SK-N-SH (cell line): ENCODE measurements at regions of chr14 and their contacts with region 1.

Region 1: GRCh38 chr14:94485944-94486841 is 10.2 kb upstream of the SERPINA9 start:
- DNase-seq: peak; percentile 85
- H3K4me3 ChIP-seq: peak overlapping the region; percentile 12 to 56; a peak in 2 of 4 replicates
- H3K27ac ChIP-seq: no peak overlapping the region
- H3K4me1 ChIP-seq: peaks cover 3 to 4% of the 10 kb centered on the region in 2 experiments; a peak in 2 of 4 replicates
- H3K27me3 ChIP-seq: no peaks in the 10 kb centered on the region; the same call in 1 of the 2 replicates
- CTCF ChIP-seq: peak; percentile 99
- EP300 ChIP-seq: no peak
- RAD21 ChIP-seq: peak; percentile 78

Region 2: GRCh38 chr14:94412671-94413638 is 73.2 kb before region 1 on chr14:
- CTCF ChIA-PET with region 1: interaction called, 10 read pairs
- POLR2A ChIA-PET with region 1: no interaction called
- DNase-seq: no peak
- H3K4me3 ChIP-seq: no peak overlapping the region
- H3K27ac ChIP-seq: no peak overlapping the region
- H3K4me1 ChIP-seq: no peaks in the 10 kb centered on the region
- H3K27me3 ChIP-seq: no peaks in the 10 kb centered on the region
- CTCF ChIP-seq: peak; percentile 58
- EP300 ChIP-seq: no peak
- RAD21 ChIP-seq: peak; percentile 43

Region 3: DNA sequence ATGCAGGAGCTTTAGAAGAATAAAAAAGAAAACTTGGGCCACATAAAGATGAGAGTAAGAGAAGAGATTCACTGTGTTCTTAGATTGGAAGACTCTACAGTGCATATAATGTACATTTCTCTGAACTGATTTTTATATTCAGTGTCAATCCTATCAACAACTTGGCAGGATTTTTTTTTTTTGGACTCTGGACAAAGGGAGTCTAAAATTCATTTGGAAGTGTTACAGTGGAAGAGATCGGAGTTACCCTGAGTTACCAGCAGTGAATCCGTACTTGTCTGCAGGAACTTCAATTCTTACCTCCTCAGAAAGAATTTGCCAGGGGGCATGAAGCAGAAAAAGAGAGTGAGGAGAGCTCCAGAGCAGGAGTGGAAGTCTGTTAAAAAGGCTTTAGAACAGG is 57.6 kb before region 1 on chr14:
- CTCF ChIA-PET with region 1: interaction called, 37 read pairs
- POLR2A ChIA-PET with region 1: interaction called, 4 read pairs
- DNase-seq: no peak
- H3K4me3 ChIP-seq: no peak overlapping the region
- H3K27ac ChIP-seq: no peak overlapping the region
- H3K4me1 ChIP-seq: no peaks in the 10 kb centered on the region
- H3K27me3 ChIP-seq: peaks cover 6% of the 10 kb centered on the region; the same call in 1 of the 2 replicates
- CTCF ChIP-seq: no peak
- EP300 ChIP-seq: no peak
- RAD21 ChIP-seq: no peak

Region 4: GRCh38 chr14:94474581-94475031 is 11.6 kb before region 1 on chr14:
- CTCF ChIA-PET with region 1: interaction called, 48 read pairs
- POLR2A ChIA-PET with region 1: no interaction called
- DNase-seq: no peak
- H3K4me3 ChIP-seq: no peak overlapping the region
- H3K27ac ChIP-seq: no peak overlapping the region
- H3K4me1 ChIP-seq: no peaks in the 10 kb centered on the region
- H3K27me3 ChIP-seq: peaks cover 6% of the 10 kb centered on the region; the same call in 1 of the 2 replicates
- CTCF ChIP-seq: no peak
- EP300 ChIP-seq: no peak
- RAD21 ChIP-seq: no peak

Region 5: DNA sequence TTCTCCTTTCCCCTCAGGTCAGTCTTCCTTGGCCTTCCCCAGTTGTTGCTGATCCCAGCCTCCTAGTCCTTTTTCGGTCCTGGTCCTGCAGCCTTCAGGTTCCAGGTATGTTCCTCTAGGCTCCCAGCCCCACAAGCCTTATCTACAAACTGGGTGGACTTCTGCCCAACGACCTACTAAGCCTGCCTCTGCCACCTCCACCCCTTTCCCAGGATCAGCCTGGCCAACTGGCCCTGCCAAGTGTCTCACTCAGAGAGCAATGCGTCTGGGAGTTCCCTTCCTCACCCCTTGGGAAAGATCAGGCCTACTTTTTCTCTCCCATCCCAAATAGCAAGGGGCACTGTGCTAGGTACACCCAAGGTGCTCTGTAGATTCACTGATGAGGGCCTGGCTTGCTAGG is 23.2 kb after region 1 on chr14 and contains the start of gene SERPINA12:
- CTCF ChIA-PET with region 1: interaction called, 21 read pairs
- POLR2A ChIA-PET with region 1: no interaction called
- DNase-seq: no peak
- H3K4me3 ChIP-seq: no peak within 1 kb of the TSS
- H3K27ac ChIP-seq: no peak within 1 kb of the TSS
- H3K4me1 ChIP-seq: no peaks in the 10 kb centered on the region
- H3K27me3 ChIP-seq: peaks cover 17% of the 10 kb centered on the region; the same call in 1 of the 2 replicates
- CTCF ChIP-seq: no peak
- EP300 ChIP-seq: no peak
- RAD21 ChIP-seq: no peak
- polyA plus RNA-seq, gene SERPINA12: not detected in 2 replicates

Region 6: DNA sequence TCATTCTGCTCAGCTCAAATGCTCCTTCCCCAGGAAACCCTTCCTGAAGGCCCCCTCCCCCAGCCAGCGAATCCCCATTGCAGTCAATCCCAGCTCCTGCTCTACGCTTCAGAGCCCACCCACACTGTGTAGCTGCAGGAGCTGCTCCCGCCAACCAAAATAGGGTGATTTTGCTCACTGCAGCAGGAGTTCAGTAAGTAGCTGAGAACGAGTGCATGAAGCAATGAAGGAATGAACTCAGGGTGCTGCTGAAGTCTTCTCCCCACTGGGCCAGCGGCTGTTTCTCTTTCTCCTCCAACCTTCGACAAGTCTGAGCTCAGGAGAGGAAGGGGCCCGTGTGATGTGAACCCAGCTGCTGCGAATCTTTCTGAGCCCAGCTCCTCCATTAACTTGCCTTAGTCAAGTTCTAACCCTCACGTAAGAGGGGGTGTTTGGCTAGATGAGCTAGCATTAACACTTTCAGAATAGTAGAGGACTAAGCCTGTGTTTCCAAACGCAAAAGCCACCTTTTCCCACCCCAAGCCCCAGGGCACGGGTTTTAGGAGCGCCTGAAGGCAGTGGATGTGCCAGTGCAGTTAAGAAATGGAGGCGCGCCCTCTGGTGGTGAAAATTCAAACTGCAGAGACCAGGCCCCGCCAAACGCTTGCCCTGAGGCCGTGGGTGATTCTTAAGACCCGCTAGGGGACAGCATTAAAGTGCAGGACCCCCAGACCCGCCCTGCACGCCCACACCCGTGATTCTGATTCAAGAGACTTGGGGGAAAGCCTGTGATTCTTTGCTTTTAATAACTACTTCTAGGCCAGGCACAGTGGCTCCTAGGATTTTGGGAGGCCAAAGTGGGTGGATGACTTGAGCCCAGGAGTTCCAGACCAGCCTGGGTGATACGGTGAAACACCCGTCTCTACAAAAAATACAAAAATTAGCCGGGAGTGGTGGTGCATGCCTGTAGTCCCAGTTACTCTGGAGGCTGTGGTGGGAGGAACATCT is 63.1 kb after region 1 on chr14:
- CTCF ChIA-PET with region 1: interaction called, 15 read pairs
- POLR2A ChIA-PET with region 1: no interaction called
- DNase-seq: peak; percentile 66
- H3K4me3 ChIP-seq: no peak overlapping the region; a peak in 1 of 4 replicates
- H3K27ac ChIP-seq: no peak overlapping the region
- H3K4me1 ChIP-seq: no peaks in the 10 kb centered on the region
- H3K27me3 ChIP-seq: no peaks in the 10 kb centered on the region
- CTCF ChIP-seq: peak; percentile 93
- EP300 ChIP-seq: no peak
- RAD21 ChIP-seq: peak; percentile 57